ENCODE measurements at regions of chr12 and their contacts with region 1.

Region 1: DNA sequence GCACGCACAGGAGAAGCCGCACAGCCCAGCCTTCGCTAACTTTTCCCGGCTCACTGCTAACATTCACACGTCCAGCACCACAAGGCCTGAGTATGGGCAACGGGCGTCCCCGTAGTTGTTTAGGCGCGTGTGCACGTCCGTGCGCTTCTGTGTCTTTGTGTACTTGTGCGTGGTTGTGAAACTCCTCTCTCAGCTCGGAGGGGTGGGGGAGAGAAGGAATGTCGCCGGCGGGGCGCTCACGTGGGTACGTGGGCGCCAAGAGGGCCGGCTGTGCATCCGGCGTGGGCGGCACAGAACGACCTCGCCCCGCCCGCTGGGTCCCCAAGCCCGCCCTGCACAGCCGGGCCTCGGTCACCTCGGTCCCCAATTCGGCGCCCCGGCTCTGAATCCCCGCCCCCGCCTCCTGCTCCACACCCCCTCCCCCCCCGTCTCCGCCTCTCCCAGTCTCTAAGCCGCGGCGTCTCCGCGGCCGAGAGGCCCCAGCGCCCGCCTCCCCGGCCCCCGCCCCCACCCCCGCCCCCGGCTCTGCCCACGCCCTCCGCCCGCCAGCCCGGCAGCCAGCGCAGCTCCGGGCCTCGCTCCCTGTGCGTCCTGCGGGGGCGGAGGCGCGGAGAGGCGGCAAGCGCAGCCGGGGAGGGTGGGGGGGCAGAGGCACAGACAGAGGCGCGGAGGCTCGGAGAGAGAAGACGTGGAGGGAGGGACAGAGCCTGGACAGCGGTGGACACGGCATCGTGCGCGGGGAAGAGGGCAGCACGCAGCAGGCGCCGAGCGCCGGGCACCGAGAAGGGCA is at the start of gene NAB2:
- DNase-seq: peak; percentile 85 to 99 (median 95)
- ATAC-seq: peak; percentile 57
- H3K4me3 ChIP-seq: peak within 1 kb of the TSS; percentile 82
- H3K4me3 Mint-ChIP-seq: peak within 1 kb of the TSS; percentile 98
- H3K27ac ChIP-seq: peak within 1 kb of the TSS; percentile 99
- H3K27ac Mint-ChIP-seq: peak within 1 kb of the TSS; percentile 98
- H3K4me1 ChIP-seq: peaks cover 71% of the 10 kb centered on the region
- H3K4me1 Mint-ChIP-seq: peaks cover 70% of the 10 kb centered on the region
- H3K27me3 ChIP-seq: no peaks in the 10 kb centered on the region
- H3K27me3 Mint-ChIP-seq: no peaks in the 10 kb centered on the region
- CTCF ChIP-seq: no peak
- total RNA-seq, gene NAB2: 4.8 to 6.1 TPM

Region 2: DNA sequence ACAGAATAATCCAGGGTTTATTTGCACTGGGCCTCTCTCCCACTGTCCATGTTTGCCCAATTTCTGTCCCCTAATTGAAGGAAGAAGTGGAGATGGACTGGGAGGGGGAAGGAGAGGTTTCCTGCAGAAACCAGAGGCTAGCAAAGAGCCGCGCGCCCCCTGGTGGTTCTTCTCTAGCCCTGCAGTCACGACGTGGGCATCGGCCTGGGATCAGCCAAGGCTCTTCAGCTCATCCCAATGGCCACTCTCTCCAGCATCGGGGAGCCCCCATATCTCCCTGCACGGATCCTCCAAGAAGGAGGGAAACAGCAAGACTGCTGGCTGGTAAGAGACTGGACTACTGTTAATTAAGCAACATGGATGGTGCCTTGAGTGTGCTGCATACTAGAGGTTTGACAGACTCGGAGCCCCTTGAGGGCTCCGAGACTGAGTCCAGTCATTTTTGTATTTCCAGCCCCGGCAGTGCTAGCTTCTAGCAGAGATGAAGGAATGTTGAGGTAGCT is 101.1 kb before region 1 on chr12:
- CTCF ChIA-PET with region 1: no interaction called
- POLR2A ChIA-PET with region 1: no interaction called
- intact Hi-C with region 1: no loop called
- DNase-seq: peak; percentile 53 to 86 (median 68)
- ATAC-seq: peak; percentile 86
- H3K4me3 ChIP-seq: no peak overlapping the region
- H3K4me3 Mint-ChIP-seq: no peak overlapping the region
- H3K27ac ChIP-seq: no peak overlapping the region
- H3K27ac Mint-ChIP-seq: no peak overlapping the region
- H3K4me1 ChIP-seq: peaks cover 18% of the 10 kb centered on the region
- H3K4me1 Mint-ChIP-seq: peaks cover 14% of the 10 kb centered on the region
- H3K27me3 ChIP-seq: no peaks in the 10 kb centered on the region
- H3K27me3 Mint-ChIP-seq: no peaks in the 10 kb centered on the region
- CTCF ChIP-seq: peak; percentile 82

Region 3: GRCh38 chr12:57069523-57069922 is 19.1 kb before region 1 on chr12:
- CTCF ChIA-PET with region 1: interaction called, 67 read pairs
- POLR2A ChIA-PET with region 1: interaction called, 15 read pairs
- intact Hi-C with region 1: loop called (anchors 1 kb)
- DNase-seq: peak in 13 of 14 experiments; percentile 20 to 89 (median 51)
- ATAC-seq: peak; percentile 99
- H3K4me3 ChIP-seq: no peak overlapping the region
- H3K4me3 Mint-ChIP-seq: peak overlapping the region; percentile 18
- H3K27ac ChIP-seq: peak overlapping the region; percentile 34 to 38
- H3K27ac Mint-ChIP-seq: peak overlapping the region; percentile 81
- H3K4me1 ChIP-seq: peaks cover 9% of the 10 kb centered on the region
- H3K4me1 Mint-ChIP-seq: peaks cover 31% of the 10 kb centered on the region
- H3K27me3 ChIP-seq: no peaks in the 10 kb centered on the region
- H3K27me3 Mint-ChIP-seq: no peaks in the 10 kb centered on the region
- CTCF ChIP-seq: peak; percentile 87

Region 4: DNA sequence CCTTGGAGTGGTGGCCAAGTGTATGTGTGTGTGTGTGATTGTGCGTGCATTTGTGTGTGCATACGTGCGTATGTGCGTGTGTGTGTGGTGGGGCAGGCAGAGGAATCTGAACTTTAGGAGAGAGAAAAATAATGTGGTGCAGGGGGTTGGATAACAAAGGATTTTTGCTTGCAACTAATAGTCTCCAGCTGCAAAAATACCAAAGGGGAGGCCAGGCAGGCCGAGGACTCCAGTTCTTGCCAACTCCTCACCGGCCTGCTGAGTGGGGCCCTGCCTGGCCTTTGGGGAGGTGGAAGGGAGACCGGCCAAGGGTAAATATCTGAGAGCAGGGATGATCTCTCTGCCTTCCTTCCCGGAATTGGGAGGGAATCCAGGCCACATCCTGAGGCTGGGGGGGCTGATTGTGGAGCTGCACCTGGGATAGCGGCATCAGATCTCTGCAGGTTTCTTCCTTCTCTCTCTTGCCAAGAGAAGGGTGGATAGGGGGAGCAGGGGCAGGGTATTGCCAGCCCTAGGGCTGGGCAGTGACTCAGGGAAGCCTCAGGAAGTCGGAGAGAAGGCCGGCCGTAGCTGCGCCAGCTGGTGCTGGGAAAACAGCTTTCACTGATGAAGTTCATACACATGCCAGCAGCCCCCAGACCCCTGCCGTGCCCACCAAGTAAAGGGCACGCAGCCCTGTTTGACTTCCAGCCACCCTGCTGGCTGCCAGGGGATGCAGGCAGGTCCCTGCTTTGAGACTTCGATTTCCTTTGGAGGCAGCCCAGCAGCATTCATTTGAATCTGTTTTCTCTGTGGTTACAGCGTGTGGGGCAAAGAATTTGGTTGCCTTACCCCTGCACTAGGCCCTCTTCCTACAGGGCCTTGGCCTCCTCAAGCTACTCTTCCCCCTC is 63.3 kb after region 1 on chr12:
- CTCF ChIA-PET with region 1: no interaction called
- POLR2A ChIA-PET with region 1: no interaction called
- intact Hi-C with region 1: no loop called
- DNase-seq: no peak
- ATAC-seq: no peak
- H3K4me3 ChIP-seq: no peak overlapping the region
- H3K4me3 Mint-ChIP-seq: no peak overlapping the region
- H3K27ac ChIP-seq: no peak overlapping the region
- H3K27ac Mint-ChIP-seq: no peak overlapping the region
- H3K4me1 ChIP-seq: no peaks in the 10 kb centered on the region
- H3K4me1 Mint-ChIP-seq: no peaks in the 10 kb centered on the region
- H3K27me3 ChIP-seq: no peaks in the 10 kb centered on the region
- H3K27me3 Mint-ChIP-seq: no peaks in the 10 kb centered on the region
- CTCF ChIP-seq: no peak

Measured in CD4-positive, alpha-beta T cell (primary cell).